Activated CD4-positive, alpha-beta memory T cell treated with anti-CD3 and anti-CD28 coated beads for 36 hours (primary cell): ENCODE measurements at regions of chr5 and their contacts with region 1.

Region 1: DNA sequence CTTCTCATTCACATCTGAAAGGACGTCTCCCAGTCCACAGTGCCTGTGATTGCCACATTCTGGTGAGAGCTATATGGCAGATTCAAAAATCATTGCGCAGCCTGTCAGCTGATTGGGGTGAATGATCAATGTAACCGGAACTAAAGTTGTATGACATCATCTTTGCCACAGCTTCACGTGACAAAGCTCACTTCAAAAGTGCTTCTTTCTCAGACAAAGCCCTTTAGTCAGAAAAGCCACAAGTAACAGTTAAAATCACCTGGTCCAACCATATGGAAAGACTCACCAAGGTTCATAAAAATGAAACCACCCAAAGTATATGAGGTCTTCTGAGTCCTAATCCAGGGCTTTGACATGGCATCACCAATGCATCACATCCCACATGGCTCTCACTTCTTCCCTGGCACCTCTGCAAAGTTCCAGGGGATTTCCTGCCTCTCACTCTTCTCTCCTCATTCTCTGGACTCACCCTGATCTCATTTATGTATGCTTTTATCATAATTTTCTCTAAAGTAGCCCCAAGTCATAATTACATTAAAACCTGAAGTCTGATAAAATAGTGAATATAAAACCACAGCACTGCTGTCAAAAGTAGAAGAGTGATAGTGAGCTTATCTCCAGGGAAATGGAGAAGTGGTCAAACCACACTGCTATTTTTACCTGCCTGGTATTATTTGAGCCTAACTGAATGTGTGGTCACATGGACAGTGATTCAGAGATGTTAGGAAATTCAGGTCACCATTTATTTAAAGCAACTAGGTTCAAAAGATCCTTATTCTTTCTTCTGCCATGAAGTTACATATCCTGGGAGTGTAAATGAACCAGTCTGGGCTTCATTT is 193.1 kb upstream of the PTGER4 start:
- DNase-seq: peak; percentile 77
- H3K4me3 Mint-ChIP-seq: peak overlapping the region; percentile 7
- H3K27ac Mint-ChIP-seq: peak overlapping the region; percentile 84
- H3K4me1 Mint-ChIP-seq: peaks cover 81% of the 10 kb centered on the region
- H3K27me3 Mint-ChIP-seq: no peaks in the 10 kb centered on the region

Region 2: DNA sequence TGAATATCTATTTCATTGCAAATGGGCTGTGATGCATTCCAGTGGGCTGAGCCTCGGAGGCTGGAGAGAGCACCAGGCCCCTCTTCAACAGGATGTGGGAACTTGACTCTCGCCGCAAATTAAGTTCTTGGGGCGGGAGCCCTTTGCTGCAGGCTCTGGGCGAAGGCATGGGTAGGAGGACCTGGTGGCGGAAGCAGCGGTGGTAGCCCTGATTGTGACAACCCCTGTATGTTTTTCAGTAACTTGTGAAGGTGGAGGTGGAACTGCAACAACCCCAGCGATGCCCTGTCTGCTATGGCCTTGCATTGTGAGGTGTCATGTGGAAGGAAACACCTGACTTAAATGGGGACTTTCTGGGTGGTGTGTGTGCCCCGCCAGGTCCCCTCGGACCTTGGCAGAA is 1276.7 kb before region 1 on chr5:
- CTCF ChIA-PET with region 1: no interaction called
- POLR2A ChIA-PET with region 1: no interaction called
- intact Hi-C with region 1: loop called (anchors 10 kb)
- DNase-seq: peak; percentile 90
- H3K4me3 Mint-ChIP-seq: peak overlapping the region; percentile 83
- H3K27ac Mint-ChIP-seq: peak overlapping the region; percentile 95
- H3K4me1 Mint-ChIP-seq: peaks cover 75% of the 10 kb centered on the region
- H3K27me3 Mint-ChIP-seq: no peaks in the 10 kb centered on the region

Region 3: GRCh38 chr5:40240111-40240510 is 246.5 kb before region 1 on chr5:
- CTCF ChIA-PET with region 1: no interaction called
- POLR2A ChIA-PET with region 1: interaction called, 3 read pairs
- intact Hi-C with region 1: loop called (anchors 1 kb)
- DNase-seq: peak; percentile 84
- H3K4me3 Mint-ChIP-seq: peak overlapping the region; percentile 21
- H3K27ac Mint-ChIP-seq: peak overlapping the region; percentile 92
- H3K4me1 Mint-ChIP-seq: peaks cover 42% of the 10 kb centered on the region
- H3K27me3 Mint-ChIP-seq: no peaks in the 10 kb centered on the region

Region 4: DNA sequence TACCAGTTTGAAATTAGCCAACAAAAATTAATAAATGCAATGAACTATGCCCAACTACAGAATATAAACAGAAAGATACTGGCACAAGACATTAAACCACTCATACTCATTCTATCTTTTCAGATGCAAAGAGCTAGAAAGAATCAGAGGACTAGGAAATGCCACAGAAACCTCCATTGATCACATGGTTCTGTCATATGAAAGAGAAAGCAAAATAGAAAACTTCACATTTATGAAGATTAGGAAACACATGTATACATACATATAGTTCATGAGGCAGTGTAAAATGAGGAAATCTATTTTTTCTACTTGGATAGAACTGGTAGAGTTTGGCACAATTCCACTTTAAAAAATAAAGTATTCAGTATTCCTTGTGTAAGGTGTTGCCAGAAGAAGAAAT is 82.0 kb before region 1 on chr5:
- CTCF ChIA-PET with region 1: interaction called, 6 read pairs
- POLR2A ChIA-PET with region 1: interaction called, 17 read pairs
- intact Hi-C with region 1: loop called (anchors 1 kb)
- DNase-seq: no peak
- H3K4me3 Mint-ChIP-seq: no peak overlapping the region
- H3K27ac Mint-ChIP-seq: peak overlapping the region; percentile 99
- H3K4me1 Mint-ChIP-seq: peaks cover 90% of the 10 kb centered on the region
- H3K27me3 Mint-ChIP-seq: no peaks in the 10 kb centered on the region

Region 5: DNA sequence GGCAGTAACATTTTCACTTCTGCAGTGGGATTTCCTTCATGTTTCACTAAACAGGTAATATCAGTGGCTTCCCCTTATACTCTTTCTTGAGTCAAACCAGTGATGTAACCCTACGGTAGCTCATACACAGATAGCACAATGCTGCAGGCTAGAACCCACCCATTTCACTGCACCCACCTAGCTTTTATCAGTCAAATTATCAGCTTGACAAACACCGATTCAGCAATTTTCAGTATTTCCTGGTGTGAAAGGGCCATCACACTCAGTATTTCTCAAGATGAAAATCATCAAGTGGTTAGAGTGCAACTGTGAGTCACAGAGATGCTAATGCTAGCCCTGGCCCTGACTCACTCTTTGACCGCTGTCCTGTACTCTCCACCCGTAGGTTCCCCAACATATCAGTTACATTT is 49.2 kb before region 1 on chr5:
- CTCF ChIA-PET with region 1: interaction called, 7 read pairs
- POLR2A ChIA-PET with region 1: interaction called, 8 read pairs
- intact Hi-C with region 1: loop called (anchors 1 kb)
- DNase-seq: peak; percentile 58
- H3K4me3 Mint-ChIP-seq: no peak overlapping the region
- H3K27ac Mint-ChIP-seq: peak overlapping the region; percentile 70
- H3K4me1 Mint-ChIP-seq: peaks cover 74% of the 10 kb centered on the region
- H3K27me3 Mint-ChIP-seq: no peaks in the 10 kb centered on the region

Region 6: GRCh38 chr5:40679155-40679913 is 192.7 kb after region 1 on chr5:
- CTCF ChIA-PET with region 1: interaction called, 6 read pairs
- POLR2A ChIA-PET with region 1: interaction called, 7 read pairs
- intact Hi-C with region 1: loop called (anchors 1 kb)
- DNase-seq: peak; percentile 96
- H3K4me3 Mint-ChIP-seq: peak overlapping the region; percentile 93
- H3K27ac Mint-ChIP-seq: peak overlapping the region; percentile 97
- H3K4me1 Mint-ChIP-seq: peaks cover 37% of the 10 kb centered on the region
- H3K27me3 Mint-ChIP-seq: no peaks in the 10 kb centered on the region

Region 7: DNA sequence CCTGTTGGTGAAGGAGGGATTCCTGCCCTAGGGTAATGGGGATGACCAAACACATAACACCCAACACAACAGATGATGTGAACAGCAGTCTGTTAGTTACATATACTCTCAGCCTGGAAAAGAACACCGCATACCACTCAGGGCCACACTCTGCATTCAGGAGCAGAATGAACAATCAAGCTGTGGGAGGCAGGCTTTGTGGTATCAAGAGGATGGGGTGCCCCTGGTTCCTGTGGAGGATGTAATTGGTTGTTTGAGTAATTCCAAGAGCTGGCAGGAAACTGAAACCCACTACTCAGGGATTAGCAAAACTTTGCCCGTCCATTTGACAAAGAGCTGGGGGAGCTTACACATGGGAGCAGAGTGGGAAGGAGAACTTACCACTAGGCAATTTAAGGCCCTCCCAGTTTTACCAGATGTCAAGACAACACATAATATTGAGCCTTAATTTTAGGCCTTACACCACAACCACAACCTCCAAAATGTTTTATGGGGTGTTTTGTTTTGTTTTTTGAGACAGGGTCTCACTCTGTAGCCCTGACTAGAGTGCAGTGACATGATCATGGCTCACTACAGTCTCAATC is 327.1 kb after region 1 on chr5:
- CTCF ChIA-PET with region 1: no interaction called
- POLR2A ChIA-PET with region 1: no interaction called
- intact Hi-C with region 1: loop called (anchors 1 kb)
- DNase-seq: peak; percentile 83
- H3K4me3 Mint-ChIP-seq: no peak overlapping the region
- H3K27ac Mint-ChIP-seq: peak overlapping the region; percentile 64
- H3K4me1 Mint-ChIP-seq: peaks cover 9% of the 10 kb centered on the region
- H3K27me3 Mint-ChIP-seq: no peaks in the 10 kb centered on the region